ENCODE measurements at regions of chr15 and their contacts with region 1.

Region 1: DNA sequence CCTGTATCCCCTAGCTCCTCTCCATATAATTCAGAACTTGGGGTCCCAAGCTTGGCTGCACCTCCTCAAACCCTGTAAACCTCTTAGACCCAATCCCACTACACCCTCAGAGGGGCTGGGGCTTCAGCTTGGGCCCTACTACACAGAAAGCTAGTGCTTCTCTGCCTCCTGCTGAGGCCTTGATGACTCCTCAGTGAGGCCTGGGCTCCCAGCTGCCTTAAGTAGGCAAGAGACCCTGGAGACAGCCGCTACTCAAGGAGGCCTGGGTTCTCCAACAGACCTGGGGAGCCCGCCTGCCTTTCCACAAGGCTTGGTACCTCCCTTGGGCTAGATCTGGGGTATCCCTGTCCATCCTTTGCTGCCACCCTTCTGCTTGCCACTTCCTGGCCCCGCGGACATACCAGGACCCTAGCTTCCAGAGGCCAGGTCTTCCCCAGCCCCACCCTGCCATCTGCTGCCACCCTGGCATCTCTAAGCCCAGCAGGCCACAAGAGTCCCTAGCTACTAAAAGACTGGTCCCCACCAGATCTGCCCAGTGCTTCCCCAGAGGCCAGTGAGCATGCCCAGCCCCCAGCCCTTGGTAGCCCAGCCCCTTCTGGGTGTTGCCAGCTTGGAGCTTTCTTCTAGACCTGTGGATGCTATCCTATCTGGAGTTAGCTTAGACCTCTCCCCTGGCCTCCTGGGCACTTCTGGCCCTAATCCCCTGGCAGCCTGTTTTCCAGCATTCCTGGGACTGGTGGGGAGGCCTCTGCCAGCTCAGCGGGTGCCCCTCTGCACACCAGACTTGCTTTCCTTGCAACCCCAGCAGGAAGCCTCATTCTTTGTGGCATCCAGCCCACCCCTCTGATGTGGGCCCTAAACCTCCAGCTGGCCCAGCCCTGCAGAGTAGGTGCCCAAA is 13.7 kb downstream of the C15orf39 start:
- DNase-seq: no peak
- ATAC-seq: peak; percentile 9
- H3K4me3 Mint-ChIP-seq: no peak overlapping the region
- H3K27ac Mint-ChIP-seq: no peak overlapping the region
- H3K4me1 Mint-ChIP-seq: peaks cover 25% of the 10 kb centered on the region
- H3K27me3 Mint-ChIP-seq: no peaks in the 10 kb centered on the region; the same call in 1 of the 2 replicates
- CTCF ChIP-seq: no peak

Region 2: DNA sequence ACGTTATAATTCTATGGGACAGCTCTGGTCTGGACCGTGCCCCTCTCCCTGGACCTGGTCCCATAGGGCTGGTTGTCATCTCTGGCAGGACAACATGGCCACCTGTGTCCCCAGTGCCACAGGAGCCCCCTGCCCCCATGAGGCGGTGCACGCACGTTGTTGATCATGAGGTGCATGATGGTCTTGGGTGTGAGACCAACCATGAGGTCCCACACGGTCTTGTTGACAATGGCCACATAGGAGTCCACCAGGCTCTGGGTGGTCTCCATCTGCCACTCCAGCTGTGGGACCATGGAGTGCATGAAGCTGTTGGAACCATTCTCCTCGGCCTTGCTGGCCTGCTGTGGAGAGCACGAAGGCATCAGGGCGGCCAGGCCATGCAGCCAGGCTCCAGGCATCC is 87.0 kb after region 1 on chr15:
- CTCF ChIA-PET with region 1: interaction called, 14 read pairs
- POLR2A ChIA-PET with region 1: interaction called, 6 read pairs
- DNase-seq: no peak
- ATAC-seq: no peak
- H3K4me3 Mint-ChIP-seq: no peak overlapping the region
- H3K27ac Mint-ChIP-seq: no peak overlapping the region
- H3K4me1 Mint-ChIP-seq: peaks cover 4% of the 10 kb centered on the region
- H3K27me3 Mint-ChIP-seq: peaks cover 7% of the 10 kb centered on the region; the same call in 1 of the 2 replicates
- CTCF ChIP-seq: no peak

Region 3: DNA sequence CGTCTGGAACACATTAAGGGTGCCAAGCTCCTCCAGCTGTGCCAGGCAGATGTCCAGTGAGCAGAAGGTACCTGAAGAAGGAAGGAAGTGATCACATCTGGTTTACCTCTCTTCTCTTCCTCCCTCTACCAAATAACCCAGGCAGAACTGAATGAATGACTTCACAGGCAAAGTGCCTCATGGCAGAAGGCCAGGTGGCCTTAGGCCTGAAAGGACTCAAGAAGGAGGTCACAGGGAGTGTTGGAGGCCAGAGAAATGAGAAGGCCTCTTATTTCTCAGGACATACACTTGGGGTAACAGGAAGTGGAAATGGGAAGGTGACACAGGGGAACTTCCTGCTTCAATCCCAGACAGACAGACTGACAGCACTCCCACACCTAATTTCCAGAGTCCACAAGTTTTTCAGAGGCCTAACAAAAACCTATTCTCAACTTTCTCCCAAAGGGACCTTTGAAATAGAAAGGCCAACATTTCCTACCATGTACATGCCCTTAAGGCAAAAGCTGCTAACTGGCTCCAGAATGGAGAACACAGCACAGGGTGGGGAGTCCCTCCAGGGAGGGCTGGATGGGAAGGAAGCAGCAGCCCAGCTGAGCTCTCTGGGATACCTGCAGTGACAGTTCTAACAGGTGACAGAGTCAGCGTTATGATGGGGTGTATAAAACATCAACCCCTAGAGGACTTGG is 253.7 kb after region 1 on chr15:
- CTCF ChIA-PET with region 1: no interaction called
- POLR2A ChIA-PET with region 1: no interaction called
- DNase-seq: no peak
- ATAC-seq: no peak
- H3K4me3 Mint-ChIP-seq: no peak overlapping the region
- H3K27ac Mint-ChIP-seq: no peak overlapping the region
- H3K4me1 Mint-ChIP-seq: no peaks in the 10 kb centered on the region
- H3K27me3 Mint-ChIP-seq: no peaks in the 10 kb centered on the region
- CTCF ChIP-seq: no peak

Measured in WTC11 (cell line).